ENCODE measurements at regions of chr9 and their contacts with region 1.

Region 1: GRCh38 chr9:112037281-112038016 is 137.6 kb downstream of the SUSD1 start:
- DNase-seq: peak; percentile 74
- H3K4me3 Mint-ChIP-seq: peak overlapping the region; percentile 43
- H3K27ac Mint-ChIP-seq: peak overlapping the region; percentile 82
- H3K4me1 Mint-ChIP-seq: peaks cover 53% of the 10 kb centered on the region
- H3K27me3 Mint-ChIP-seq: peaks cover 16% of the 10 kb centered on the region

Region 2: DNA sequence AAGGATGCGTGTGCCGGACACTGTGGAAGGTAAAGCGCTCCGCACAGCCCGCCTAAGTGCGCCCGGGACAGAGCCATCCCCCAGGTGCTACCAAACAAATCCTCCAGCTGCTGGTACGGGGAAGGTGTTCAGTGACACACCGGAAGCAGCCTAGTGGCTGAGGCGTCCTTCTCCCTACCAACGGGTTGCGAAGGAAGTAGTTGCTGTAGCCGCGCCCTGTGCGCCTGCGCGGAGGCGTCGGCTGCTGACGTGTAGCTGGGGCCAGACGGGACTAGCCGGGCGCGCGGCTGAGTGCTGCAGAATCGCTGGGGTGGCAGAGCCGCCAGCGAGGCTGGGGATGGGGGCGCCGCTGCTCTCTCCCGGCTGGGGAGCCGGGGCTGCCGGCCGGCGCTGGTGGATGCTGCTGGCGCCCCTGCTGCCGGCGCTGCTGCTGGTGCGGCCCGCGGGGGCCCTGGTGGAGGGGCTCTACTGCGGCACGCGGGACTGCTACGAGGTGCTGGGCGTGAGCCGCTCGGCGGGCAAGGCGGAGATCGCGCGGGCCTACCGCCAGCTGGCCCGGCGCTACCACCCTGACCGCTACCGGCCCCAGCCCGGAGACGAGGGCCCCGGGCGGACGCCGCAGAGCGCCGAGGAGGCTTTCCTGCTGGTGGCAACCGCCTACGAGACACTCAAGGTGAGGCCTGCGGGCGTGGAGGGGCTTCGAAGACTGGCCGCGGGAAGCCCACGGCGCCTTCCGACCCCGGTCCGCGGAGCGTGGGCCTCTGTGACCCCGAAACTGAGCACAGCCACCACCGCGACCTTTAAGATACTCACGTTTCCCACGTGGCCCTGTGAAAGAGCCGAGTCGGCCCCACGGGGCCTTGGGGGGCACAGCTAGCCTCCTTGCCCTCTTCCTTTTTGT is 406.1 kb before region 1 on chr9 and contains the start of gene DNAJC25:
- intact Hi-C with region 1: loop called (anchors 10 kb)
- DNase-seq: peak; percentile 97
- H3K4me3 Mint-ChIP-seq: peak within 1 kb of the TSS; percentile 98
- H3K27ac Mint-ChIP-seq: peak within 1 kb of the TSS; percentile 93
- H3K4me1 Mint-ChIP-seq: peaks cover 54% of the 10 kb centered on the region
- H3K27me3 Mint-ChIP-seq: peaks cover 3% of the 10 kb centered on the region
- total RNA-seq, gene DNAJC25: 5.8 and 6.1 TPM in 2 replicates

Region 3: GRCh38 chr9:111870774-111871498 is 166.5 kb before region 1 on chr9:
- intact Hi-C with region 1: loop called (anchors 1 kb)
- DNase-seq: peak; percentile 6
- H3K4me3 Mint-ChIP-seq: no peak overlapping the region
- H3K27ac Mint-ChIP-seq: peak overlapping the region; percentile 49
- H3K4me1 Mint-ChIP-seq: peaks cover 20% of the 10 kb centered on the region
- H3K27me3 Mint-ChIP-seq: peaks cover 30% of the 10 kb centered on the region

Region 4: GRCh38 chr9:111965566-111966019 is 71.9 kb before region 1 on chr9:
- intact Hi-C with region 1: loop called (anchors 1 kb)
- DNase-seq: no peak
- H3K4me3 Mint-ChIP-seq: no peak overlapping the region
- H3K27ac Mint-ChIP-seq: peak overlapping the region; percentile 65
- H3K4me1 Mint-ChIP-seq: peaks cover 7% of the 10 kb centered on the region
- H3K27me3 Mint-ChIP-seq: peaks cover 12% of the 10 kb centered on the region

Region 5: DNA sequence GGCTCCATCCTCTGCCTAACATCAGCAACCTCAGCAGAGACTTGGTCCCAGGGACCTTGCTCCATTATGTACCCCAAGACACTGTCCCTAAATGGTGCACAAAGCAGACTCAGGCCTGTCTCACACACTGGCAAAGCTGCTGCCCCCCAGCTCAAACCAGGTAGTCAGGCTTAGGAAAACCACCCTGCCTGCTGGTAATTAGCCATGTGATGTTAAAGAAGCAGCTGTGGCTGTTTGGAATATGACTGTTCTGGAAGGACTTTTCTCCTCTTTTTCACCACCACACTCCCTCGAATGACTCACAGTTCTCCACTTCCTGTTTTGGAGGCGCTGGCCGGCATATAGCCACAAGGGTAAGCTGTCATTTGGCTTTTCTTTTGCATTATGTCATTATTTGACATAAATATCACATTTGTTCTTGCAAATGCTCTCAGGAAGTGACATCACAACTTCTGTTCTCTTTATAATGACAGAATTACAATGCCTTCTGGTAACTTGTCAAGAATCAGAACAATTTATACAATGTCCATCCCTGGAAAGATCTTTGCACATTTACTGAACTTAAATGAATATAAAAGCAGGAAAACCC is 23.8 kb after region 1 on chr9:
- intact Hi-C with region 1: loop called (anchors 1 kb)
- DNase-seq: peak; percentile 38
- H3K4me3 Mint-ChIP-seq: no peak overlapping the region
- H3K27ac Mint-ChIP-seq: peak overlapping the region; percentile 4
- H3K4me1 Mint-ChIP-seq: peaks cover 27% of the 10 kb centered on the region
- H3K27me3 Mint-ChIP-seq: no peaks in the 10 kb centered on the region